ENCODE measurements at regions of chr7 and their contacts with region 1.

Region 1: DNA sequence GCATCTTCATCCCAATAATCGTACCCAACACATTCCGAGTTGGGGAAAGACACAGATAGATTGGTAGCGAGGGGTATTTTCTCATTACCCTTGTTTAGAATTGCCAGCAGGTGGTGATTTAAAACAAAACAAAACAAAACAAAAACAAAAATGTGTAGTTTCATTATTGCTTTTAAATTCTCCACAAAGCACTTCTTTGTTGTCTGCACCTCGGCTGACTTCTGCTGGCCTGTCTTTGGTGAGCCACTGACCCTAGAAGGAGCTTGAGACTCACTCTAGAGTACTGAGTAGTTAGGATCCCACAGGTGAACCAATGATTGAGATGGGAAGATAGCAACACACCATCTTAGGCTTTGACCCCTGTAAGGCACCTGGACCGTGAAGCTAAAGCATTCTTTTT is 105.4 kb upstream of the BET1 start:
- DNase-seq: no peak
- H3K4me3 ChIP-seq: no peak overlapping the region
- H3K27ac ChIP-seq: no peak overlapping the region
- H3K27me3 ChIP-seq: no peaks in the 10 kb centered on the region
- CTCF ChIP-seq: no peak

Region 2: GRCh38 chr7:94129443-94130140 is 20.0 kb after region 1 on chr7:
- CTCF ChIA-PET with region 1: interaction called, 10 read pairs
- POLR2A ChIA-PET with region 1: no interaction called
- DNase-seq: peak; percentile 90
- H3K4me3 ChIP-seq: no peak overlapping the region
- H3K27ac ChIP-seq: no peak overlapping the region
- H3K27me3 ChIP-seq: no peaks in the 10 kb centered on the region
- CTCF ChIP-seq: no peak

Measured in AG04450 (cell line).